ENCODE measurements at regions of chr1 and their contacts with region 1.

Region 1: GRCh38 chr1:74222709-74223108 is 12.5 kb upstream of the TNNI3K start:
- DNase-seq: no peak
- ATAC-seq: no peak
- H3K4me3 ChIP-seq: no peak overlapping the region
- H3K27ac ChIP-seq: no peak overlapping the region
- H3K4me1 ChIP-seq: no peaks in the 10 kb centered on the region
- H3K27me3 ChIP-seq: no peaks in the 10 kb centered on the region
- CTCF ChIP-seq: no peak
- POLR2A ChIP-seq: no peak

Region 2: GRCh38 chr1:74065081-74065480 is 157.6 kb before region 1 on chr1:
- intact Hi-C with region 1: no loop called
- DNase-seq: no peak
- ATAC-seq: no peak
- H3K4me3 ChIP-seq: no peak overlapping the region
- H3K27ac ChIP-seq: no peak overlapping the region
- H3K4me1 ChIP-seq: no peaks in the 10 kb centered on the region
- H3K27me3 ChIP-seq: no peaks in the 10 kb centered on the region
- CTCF ChIP-seq: no peak
- POLR2A ChIP-seq: no peak

Region 3: DNA sequence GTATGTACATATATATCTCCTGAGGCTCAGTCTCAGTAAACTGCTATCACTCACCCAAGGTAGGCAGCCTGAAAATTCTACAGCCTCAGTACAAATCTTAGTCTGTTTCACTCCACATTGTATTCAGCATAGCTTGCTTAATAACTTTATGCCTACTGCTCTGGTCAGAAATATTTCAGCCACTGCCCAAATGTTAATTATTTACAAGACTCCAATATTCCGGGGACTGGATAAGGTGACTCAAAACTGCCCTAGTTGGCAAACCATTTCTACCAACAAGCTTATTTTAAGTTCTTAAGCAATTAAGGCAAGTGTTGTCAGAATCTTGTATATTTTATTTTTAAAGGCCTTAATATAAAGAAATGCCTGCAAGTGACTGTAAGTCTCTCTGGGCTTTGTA is 139.6 kb before region 1 on chr1:
- intact Hi-C with region 1: no loop called
- DNase-seq: no peak
- ATAC-seq: no peak
- H3K4me3 ChIP-seq: no peak overlapping the region
- H3K27ac ChIP-seq: no peak overlapping the region
- H3K4me1 ChIP-seq: no peaks in the 10 kb centered on the region
- H3K27me3 ChIP-seq: no peaks in the 10 kb centered on the region
- CTCF ChIP-seq: no peak
- POLR2A ChIP-seq: no peak

Region 4: GRCh38 chr1:74197657-74198552 is 24.8 kb before region 1 on chr1 and contains the starts of genes FPGT and LRRIQ3:
- intact Hi-C with region 1: loop called in 1 of 10 experiments (anchors 1 kb)
- DNase-seq: peak; percentile 95 to 99 (median 96)
- ATAC-seq: peak; percentile 99 to 100 (median 100)
- H3K4me3 ChIP-seq: peak within 1 kb of the TSS; percentile 56 to 86 (median 70)
- H3K27ac ChIP-seq: peak within 1 kb of the TSS; percentile 19 to 93 (median 82)
- H3K4me1 ChIP-seq: peaks cover 0 to 20% (median 11%) of the 10 kb centered on the region in 12 donors
- H3K27me3 ChIP-seq: no peaks in the 10 kb centered on the region
- CTCF ChIP-seq: no peak
- POLR2A ChIP-seq: peak in 1 of 2 donors; percentile 84
- total RNA-seq, gene FPGT: 7.8 to 22.5 (median 11.8) TPM
- total RNA-seq, gene LRRIQ3: 0.07 to 1.5 (median 0.56) TPM

Measured in heart left ventricle (tissue), 16 donors.